ENCODE measurements at regions of chr3 and their contacts with region 1.

Region 1: GRCh38 chr3:171172070-171172469 is 145.6 kb upstream of the SLC2A2 start:
- DNase-seq: no peak
- ATAC-seq: no peak

Region 2: GRCh38 chr3:170651260-170651845 is 520.7 kb before region 1 on chr3:
- intact Hi-C with region 1: no loop called
- DNase-seq: no peak
- ATAC-seq: no peak

Region 3: GRCh38 chr3:170709046-170709445 is 463.0 kb before region 1 on chr3:
- intact Hi-C with region 1: no loop called
- DNase-seq: no peak
- ATAC-seq: peak; percentile 99

Region 4: DNA sequence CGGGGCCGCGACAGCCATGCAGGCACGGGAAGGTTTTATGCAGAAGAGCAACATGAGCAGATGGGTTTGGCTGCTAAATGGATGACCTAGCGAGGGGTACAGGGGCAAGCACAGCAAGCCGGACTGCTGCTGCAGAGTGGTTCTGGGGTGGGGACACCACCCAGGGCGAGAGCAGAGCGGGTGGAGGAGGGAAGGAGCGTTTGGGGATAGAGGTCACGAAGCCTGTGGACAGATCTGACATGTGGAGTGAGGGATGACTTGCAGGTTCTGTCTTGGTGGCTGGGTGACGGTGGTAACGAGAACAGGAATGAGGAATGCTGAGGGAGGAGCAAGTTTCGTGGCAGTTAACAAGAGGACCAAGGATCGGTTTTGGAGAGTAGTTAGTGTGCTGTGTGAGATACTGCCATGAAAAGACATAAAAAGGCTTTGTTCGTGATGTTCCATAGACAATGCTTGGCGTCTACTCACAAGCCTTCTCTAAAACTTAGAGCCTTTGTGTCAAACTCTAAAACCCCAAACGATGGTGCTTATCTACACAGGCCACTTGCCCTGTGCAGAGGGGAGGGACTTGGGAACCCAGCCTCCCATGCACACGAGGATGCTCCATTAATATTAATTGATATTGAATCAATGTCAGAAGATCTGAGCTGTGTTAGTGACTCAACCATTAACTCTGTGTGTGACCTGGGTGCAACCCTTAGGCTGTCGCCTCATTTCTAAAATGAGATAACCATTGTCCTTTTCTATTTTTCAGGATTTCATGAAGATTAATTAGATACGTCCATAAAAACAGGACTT is 12.8 kb before region 1 on chr3:
- intact Hi-C with region 1: loop called (anchors 2 kb)
- DNase-seq: no peak
- ATAC-seq: no peak

Measured in left ventricle myocardium superior (tissue), 1 donor.